PC-3 (cell line): ENCODE measurements at regions of chr3 and their contacts with region 1.

Region 1: DNA sequence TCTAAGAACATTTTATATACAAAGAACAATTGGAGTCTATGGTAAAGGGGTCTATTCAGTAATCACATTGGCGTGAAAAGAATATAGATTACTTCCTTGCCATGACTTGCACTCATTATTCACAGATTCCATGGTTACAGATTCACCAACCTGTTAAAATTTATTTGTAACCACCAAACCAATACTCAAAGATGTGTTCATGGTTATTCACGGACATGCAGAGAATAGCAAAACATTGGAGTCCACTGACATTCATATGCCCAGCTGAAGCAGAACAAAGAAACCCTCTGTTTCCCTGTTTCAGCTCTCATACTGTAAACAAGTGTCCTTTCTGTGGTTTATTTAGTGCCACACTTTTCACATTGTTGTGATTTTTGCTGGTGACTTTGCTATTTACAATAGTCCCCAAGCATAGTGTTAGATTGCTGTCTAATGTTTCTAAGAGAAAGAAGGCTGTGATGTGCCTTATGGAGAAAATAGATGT is 185.8 kb upstream of the TTC14 start:
- DNase-seq: peak; percentile 86
- ATAC-seq: peak; percentile 63
- H3K4me3 ChIP-seq: no peak overlapping the region
- H3K27ac ChIP-seq: peak overlapping the region; percentile 87
- H3K4me1 ChIP-seq: peaks cover 66% of the 10 kb centered on the region
- H3K27me3 ChIP-seq: no peaks in the 10 kb centered on the region
- CTCF ChIP-seq: no peak

Region 2: GRCh38 chr3:179716811-179717210 is 699.3 kb before region 1 on chr3:
- CTCF ChIA-PET with region 1: no interaction called
- POLR2A ChIA-PET with region 1: interaction called, 16 read pairs
- intact Hi-C with region 1: no loop called
- DNase-seq: no peak
- ATAC-seq: no peak
- H3K4me3 ChIP-seq: no peak overlapping the region
- H3K27ac ChIP-seq: no peak overlapping the region
- H3K4me1 ChIP-seq: no peaks in the 10 kb centered on the region
- H3K27me3 ChIP-seq: no peaks in the 10 kb centered on the region
- CTCF ChIP-seq: no peak

Region 3: GRCh38 chr3:180320631-180321030 is 95.5 kb before region 1 on chr3:
- CTCF ChIA-PET with region 1: no interaction called
- POLR2A ChIA-PET with region 1: no interaction called
- intact Hi-C with region 1: loop called (anchors 2 kb)
- DNase-seq: no peak
- ATAC-seq: no peak
- H3K4me3 ChIP-seq: no peak overlapping the region
- H3K27ac ChIP-seq: no peak overlapping the region
- H3K4me1 ChIP-seq: peaks cover 20% of the 10 kb centered on the region
- H3K27me3 ChIP-seq: no peaks in the 10 kb centered on the region
- CTCF ChIP-seq: no peak

Region 4: GRCh38 chr3:180700941-180701340 is 284.8 kb after region 1 on chr3:
- CTCF ChIA-PET with region 1: no interaction called
- POLR2A ChIA-PET with region 1: no interaction called
- intact Hi-C with region 1: no loop called
- DNase-seq: peak; percentile 25
- ATAC-seq: no peak
- H3K4me3 ChIP-seq: no peak overlapping the region
- H3K27ac ChIP-seq: no peak overlapping the region
- H3K4me1 ChIP-seq: no peaks in the 10 kb centered on the region
- H3K27me3 ChIP-seq: peaks cover 26% of the 10 kb centered on the region
- CTCF ChIP-seq: no peak